ENCODE measurements at regions of chr12 and their contacts with region 1.

Region 1: GRCh38 chr12:53451661-53452158 is at the start of gene PCBP2:
- DNase-seq: peak; percentile 99
- ATAC-seq: peak; percentile 98
- H3K4me3 ChIP-seq: peak within 1 kb of the TSS; percentile 56 to 88
- H3K27ac ChIP-seq: peak within 1 kb of the TSS; percentile 53 to 97
- H3K4me1 ChIP-seq: peaks cover 3 to 5% of the 10 kb centered on the region in 2 donors
- H3K27me3 ChIP-seq: no peaks in the 10 kb centered on the region
- total RNA-seq, gene PCBP2: 578 to 688 TPM

Region 2: GRCh38 chr12:53484686-53485567 is 33.2 kb after region 1 on chr12:
- intact Hi-C with region 1: loop called in 1 of 2 experiments (anchors 5 kb)
- DNase-seq: no peak
- ATAC-seq: no peak
- H3K4me3 ChIP-seq: no peak overlapping the region
- H3K27ac ChIP-seq: no peak overlapping the region
- H3K4me1 ChIP-seq: no peaks in the 10 kb centered on the region
- H3K27me3 ChIP-seq: no peaks in the 10 kb centered on the region